Panc1 (cell line): ENCODE measurements at regions of chr7 and their contacts with region 1.

Region 1: DNA sequence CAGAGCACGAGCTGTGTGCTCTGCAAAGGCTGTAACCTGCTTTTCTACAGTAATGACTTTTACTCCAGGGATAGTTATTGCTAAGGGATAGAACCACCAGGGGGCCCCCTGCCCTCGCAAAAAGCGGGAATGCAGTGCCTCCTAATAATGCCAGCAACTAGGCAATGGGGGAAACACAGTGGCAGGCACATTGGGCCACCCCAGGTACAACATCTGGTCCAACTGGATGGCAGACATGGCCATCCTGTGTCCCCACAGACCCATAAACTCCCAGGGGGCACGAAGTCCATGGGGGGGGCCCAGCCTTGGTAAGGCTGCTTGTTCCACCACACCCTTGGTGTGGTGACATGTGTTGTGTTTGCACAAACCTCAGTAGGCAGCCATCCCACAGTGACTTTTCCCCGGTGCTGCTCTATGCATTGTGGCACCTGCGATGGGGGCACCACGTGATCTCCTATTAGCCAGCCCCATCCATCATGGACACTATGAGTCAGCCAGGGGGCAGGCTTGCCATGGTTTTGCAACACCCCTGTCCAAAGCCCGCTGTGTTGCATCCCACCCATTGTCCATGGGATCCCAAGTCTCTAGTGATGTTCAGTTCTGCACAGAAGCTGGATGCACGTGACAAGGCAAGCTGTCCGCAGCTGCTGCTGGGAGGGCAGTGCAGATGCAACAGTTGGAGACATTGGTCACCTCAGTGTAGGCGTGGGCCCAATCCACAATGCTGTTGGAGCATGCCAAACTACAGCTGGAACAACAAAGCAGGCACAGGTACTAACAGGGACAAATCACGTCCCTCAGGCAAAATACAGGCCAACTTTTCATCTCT is 84.0 kb downstream of the ANLN start:
- DNase-seq: no peak
- ATAC-seq: peak; percentile 86
- H3K4me3 ChIP-seq: no peak overlapping the region
- H3K27ac ChIP-seq: no peak overlapping the region
- H3K4me1 ChIP-seq: no peaks in the 10 kb centered on the region
- H3K27me3 ChIP-seq: no peaks in the 10 kb centered on the region
- CTCF ChIP-seq: peak; percentile 88

Region 2: DNA sequence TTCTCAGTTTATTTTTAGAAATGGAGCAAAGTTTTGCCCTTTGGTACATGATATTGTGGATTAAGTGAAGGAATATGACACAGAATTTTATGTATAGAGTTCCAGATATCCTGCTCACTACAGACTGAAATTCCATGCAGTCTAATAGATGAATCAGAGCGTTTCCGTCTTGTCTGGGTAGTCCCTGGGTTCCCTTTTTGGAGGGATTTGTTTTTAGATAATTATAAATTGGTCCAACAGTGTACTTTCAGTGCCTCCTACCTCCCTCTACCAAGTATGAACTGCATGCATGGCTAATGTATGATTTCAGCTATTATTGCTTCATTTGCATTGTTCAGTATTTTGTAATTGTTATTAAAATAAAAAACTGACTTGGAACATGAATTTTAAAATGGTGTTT is 598.4 kb before region 1 on chr7:
- CTCF ChIA-PET with region 1: no interaction called
- POLR2A ChIA-PET with region 1: no interaction called
- in situ Hi-C with region 1: no loop called
- intact Hi-C with region 1: no loop called
- DNase-seq: no peak
- ATAC-seq: no peak
- H3K4me3 ChIP-seq: no peak overlapping the region
- H3K27ac ChIP-seq: no peak overlapping the region
- H3K4me1 ChIP-seq: no peaks in the 10 kb centered on the region
- H3K27me3 ChIP-seq: no peaks in the 10 kb centered on the region
- CTCF ChIP-seq: no peak

Region 3: GRCh38 chr7:37201003-37201875 is 727.6 kb after region 1 on chr7:
- CTCF ChIA-PET with region 1: interaction called, 12 read pairs
- POLR2A ChIA-PET with region 1: no interaction called
- in situ Hi-C with region 1: loop called (anchors 25 kb)
- intact Hi-C with region 1: loop called (anchors 1 kb)
- DNase-seq: no peak
- ATAC-seq: peak; percentile 86
- H3K4me3 ChIP-seq: no peak overlapping the region
- H3K27ac ChIP-seq: peak overlapping the region; percentile 36
- H3K4me1 ChIP-seq: peaks cover 19% of the 10 kb centered on the region
- H3K27me3 ChIP-seq: no peaks in the 10 kb centered on the region
- CTCF ChIP-seq: peak; percentile 94